Heart left ventricle (tissue), 16 donors: ENCODE measurements at regions of chr16 and their contacts with region 1.

Region 1: DNA sequence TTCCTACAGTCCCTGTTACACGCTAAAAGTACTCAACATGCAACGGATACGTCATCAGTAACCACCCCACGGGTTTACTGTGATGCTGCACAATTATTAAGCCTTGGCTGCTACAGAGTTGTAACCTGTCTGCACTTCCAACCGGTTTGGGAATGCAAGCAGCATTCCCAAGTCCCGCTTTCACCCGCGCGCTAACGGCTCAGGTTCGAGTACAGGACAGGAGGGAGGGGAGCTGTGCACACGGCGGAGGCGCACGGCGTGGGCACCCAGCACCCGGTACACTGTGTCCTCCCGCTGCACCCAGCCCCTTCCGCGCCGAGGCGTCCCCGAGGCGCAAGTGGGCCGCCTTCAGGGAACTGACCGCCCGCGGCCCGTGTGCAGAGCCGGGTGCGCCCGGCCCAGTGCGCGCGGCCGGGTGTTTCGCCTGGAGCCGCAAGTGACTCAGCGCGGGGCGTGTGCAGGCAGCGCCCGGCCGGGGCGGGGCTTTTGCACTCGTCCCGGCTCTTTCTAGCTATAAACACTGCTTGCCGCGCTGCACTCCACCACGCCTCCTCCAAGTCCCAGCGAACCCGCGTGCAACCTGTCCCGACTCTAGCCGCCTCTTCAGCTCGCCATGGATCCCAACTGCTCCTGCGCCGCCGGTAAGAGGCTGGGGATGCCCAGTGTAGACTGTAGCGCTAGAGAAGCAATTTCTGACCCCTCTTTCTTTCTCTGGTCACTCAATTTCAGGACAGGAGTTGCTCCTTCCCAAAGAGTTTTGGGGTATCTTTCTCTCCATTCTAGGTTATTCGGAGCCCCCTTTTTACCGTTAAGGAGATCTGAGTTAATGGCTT is at the start of gene MT2A:
- DNase-seq: peak; percentile 93 to 98 (median 96)
- ATAC-seq: peak; percentile 63 to 89 (median 84)
- H3K4me3 ChIP-seq: peak within 1 kb of the TSS; percentile 58 to 87 (median 71)
- H3K27ac ChIP-seq: peak within 1 kb of the TSS; percentile 86 to 99 (median 96)
- H3K4me1 ChIP-seq: peaks cover 9 to 70% (median 57%) of the 10 kb centered on the region in 12 donors
- H3K27me3 ChIP-seq: no peaks in the 10 kb centered on the region
- CTCF ChIP-seq: no peak
- POLR2A ChIP-seq: peak; percentile 67 to 91
- total RNA-seq, gene MT2A: 44.3 to 318 (median 125) TPM

Region 2: DNA sequence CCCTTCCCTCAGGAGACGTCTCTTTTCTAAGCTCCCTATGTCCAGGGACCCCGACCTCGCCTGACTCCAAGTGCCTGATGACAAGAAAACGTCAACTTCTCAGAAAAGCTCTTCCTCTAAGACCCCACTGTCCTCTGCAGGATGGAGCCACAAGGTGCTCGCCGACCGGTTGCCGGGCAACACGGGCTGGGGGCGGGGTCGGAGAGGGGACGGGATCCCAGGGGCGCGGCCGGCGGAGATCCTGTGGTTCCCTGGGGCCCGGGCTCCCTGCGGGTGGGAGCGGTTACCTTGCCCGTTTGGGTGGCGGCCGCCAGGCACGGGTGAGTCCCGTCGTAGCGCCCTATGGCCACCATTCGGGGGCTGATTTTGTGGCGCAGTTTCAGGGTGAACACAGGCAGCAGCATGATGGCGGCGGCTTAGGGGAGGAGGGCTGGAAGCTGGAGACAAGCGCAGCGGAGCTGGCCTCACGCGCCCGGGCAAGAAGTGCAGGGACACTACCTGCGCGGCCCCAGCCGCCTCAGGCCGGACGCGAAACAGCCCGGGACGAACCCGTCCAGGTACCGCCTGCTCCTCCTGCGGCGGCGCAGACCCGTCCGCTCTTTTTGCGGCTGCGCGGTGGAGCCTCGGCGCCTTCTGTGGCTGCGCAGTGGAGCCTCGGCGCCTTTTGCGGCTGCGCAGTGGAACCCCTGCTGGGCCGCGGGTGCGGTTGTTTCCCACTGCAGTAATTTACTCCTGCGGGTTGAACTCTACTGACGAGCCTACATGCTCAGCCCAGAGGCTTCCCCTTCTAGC is 88.6 kb before region 1 on chr16 and contains the start of gene BBS2:
- intact Hi-C with region 1: loop called in 7 of 10 experiments (anchors 5 to 10 kb)
- DNase-seq: peak; percentile 91 to 96 (median 93)
- ATAC-seq: peak; percentile 92 to 98 (median 97)
- H3K4me3 ChIP-seq: peak within 1 kb of the TSS; percentile 45 to 100 (median 90)
- H3K27ac ChIP-seq: peak within 1 kb of the TSS; percentile 64 to 94 (median 87)
- H3K4me1 ChIP-seq: peaks cover 0 to 48% (median 32%) of the 10 kb centered on the region in 12 donors
- H3K27me3 ChIP-seq: no peaks in the 10 kb centered on the region
- CTCF ChIP-seq: peak in 2 of 12 donors; percentile 9 to 12
- POLR2A ChIP-seq: peak in 1 of 2 donors; percentile 86
- total RNA-seq, gene BBS2: 31.2 to 76.2 (median 49.4) TPM

Region 3: GRCh38 chr16:56632156-56632847 is 24.0 kb after region 1 on chr16 and contains the start of gene MT1M:
- intact Hi-C with region 1: loop called in 3 of 10 experiments (anchors 2 kb)
- DNase-seq: peak; percentile 44 to 79 (median 72)
- ATAC-seq: peak; percentile 68 to 85 (median 79)
- H3K4me3 ChIP-seq: peak within 1 kb of the TSS; percentile 28 to 75 (median 58)
- H3K27ac ChIP-seq: peak within 1 kb of the TSS; percentile 25 to 81 (median 72)
- H3K4me1 ChIP-seq: peaks cover 0 to 31% (median 8%) of the 10 kb centered on the region in 12 donors
- H3K27me3 ChIP-seq: peaks cover 0 to 55% (median 19%) of the 10 kb centered on the region in 9 donors
- CTCF ChIP-seq: no peak
- POLR2A ChIP-seq: peak in 1 of 2 donors; percentile 51
- total RNA-seq, gene MT1M: 0.61 to 16.2 (median 2.2) TPM

Region 4: DNA sequence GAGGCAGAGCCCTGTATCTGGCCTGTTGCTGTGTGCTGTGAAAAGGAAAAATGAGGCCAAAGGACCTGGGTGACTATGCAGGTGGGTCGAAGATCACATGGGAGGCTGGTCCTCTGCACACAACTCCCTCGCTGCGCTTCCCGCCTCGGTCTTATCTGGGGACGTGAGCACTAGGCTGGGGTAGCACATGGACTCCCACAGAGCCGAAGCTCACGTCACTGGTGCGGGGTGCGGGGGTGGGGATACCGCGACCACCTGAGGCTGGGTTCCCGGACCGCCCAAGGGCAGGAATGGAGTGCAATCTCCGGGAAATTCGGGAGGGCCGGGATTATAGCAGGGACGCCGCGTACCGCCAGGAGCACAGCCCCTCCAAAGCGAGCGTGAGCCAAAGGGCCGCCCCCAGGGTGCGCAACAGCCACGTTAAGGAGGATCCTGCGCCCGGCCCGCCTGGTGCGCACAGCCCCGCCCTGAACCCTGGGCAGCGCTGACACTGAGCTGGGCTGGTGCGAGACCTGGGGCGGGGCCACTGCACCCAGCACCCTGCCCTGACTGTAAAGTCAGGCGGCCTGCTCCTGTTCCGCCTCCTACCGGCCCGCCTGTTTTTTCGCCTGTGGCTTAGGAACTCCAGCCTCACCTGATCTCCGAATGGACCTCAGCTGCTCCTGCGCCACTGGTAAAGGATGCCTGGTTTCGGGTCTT is 35.0 kb after region 1 on chr16:
- intact Hi-C with region 1: loop called in 4 of 10 experiments (anchors 2 to 5 kb)
- DNase-seq: peak; percentile 59 to 85 (median 79)
- ATAC-seq: peak; percentile 91 to 94 (median 92)
- H3K4me3 ChIP-seq: peak overlapping the region in 10 of 12 donors; percentile 24 to 55 (median 43)
- H3K27ac ChIP-seq: peak overlapping the region in 4 of 12 donors; percentile 9 to 41 (median 36)
- H3K4me1 ChIP-seq: peaks cover 0 to 26% (median 16%) of the 10 kb centered on the region in 12 donors
- H3K27me3 ChIP-seq: peaks cover 0 to 86% (median 31%) of the 10 kb centered on the region in 9 donors
- CTCF ChIP-seq: peak; percentile 15 to 58 (median 42)
- POLR2A ChIP-seq: no peak

Region 5: GRCh38 chr16:56700195-56700594 is 91.9 kb after region 1 on chr16:
- intact Hi-C with region 1: loop called (anchors 1 to 5 kb)
- DNase-seq: no peak
- ATAC-seq: no peak
- H3K4me3 ChIP-seq: no peak overlapping the region
- H3K27ac ChIP-seq: no peak overlapping the region
- H3K4me1 ChIP-seq: peaks cover 0 to 7% (median 1%) of the 10 kb centered on the region in 12 donors
- H3K27me3 ChIP-seq: no peaks in the 10 kb centered on the region
- CTCF ChIP-seq: no peak
- POLR2A ChIP-seq: no peak